Left ventricle myocardium inferior (tissue), 1 donor: ENCODE measurements at regions of chr2 and their contacts with region 1.

Region 1: DNA sequence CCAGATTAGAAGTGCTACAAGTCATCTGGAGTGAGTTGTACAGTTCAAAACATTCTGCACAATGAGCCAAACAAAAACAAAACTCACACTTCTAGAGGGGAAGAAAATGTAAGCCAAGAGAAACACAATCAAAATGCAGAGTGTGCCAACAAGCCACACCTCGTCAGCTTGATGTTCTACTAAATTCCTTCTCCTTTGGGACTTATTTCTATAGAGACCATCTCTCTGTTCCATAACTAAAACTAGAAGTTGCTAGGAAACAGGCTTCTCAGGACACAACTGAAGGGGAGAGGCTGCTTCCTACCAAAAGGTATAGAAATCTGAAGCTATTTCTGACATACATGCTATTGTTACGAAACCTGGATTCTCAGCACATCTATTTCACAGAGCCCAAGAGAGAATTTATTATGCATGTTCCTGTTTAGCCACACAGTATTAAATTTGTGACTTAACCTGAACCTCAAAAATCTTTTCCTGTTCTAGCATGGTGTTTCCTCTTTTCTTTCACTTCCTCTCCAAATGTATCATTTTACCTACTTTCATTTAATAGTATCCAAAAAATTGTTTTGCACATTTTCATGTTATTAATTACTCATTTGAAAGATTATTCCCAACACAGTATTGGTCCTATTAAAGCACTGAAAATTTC is 211.4 kb upstream of the CCDC150 start:
- DNase-seq: no peak
- H3K4me3 ChIP-seq: no peak overlapping the region
- H3K27ac ChIP-seq: peak overlapping the region; percentile 37
- H3K4me1 ChIP-seq: peaks cover 27% of the 10 kb centered on the region
- H3K27me3 ChIP-seq: no peaks in the 10 kb centered on the region
- CTCF ChIP-seq: no peak

Region 2: GRCh38 chr2:196372811-196373664 is 55.1 kb before region 1 on chr2:
- intact Hi-C with region 1: loop called (anchors 2 kb)
- DNase-seq: no peak
- H3K4me3 ChIP-seq: peak overlapping the region; percentile 22
- H3K27ac ChIP-seq: peak overlapping the region; percentile 86
- H3K4me1 ChIP-seq: peaks cover 37% of the 10 kb centered on the region
- H3K27me3 ChIP-seq: no peaks in the 10 kb centered on the region
- CTCF ChIP-seq: no peak